Astrocyte of the cerebellum (primary cell): ENCODE measurements at regions of chr1 and their contacts with region 1.

Region 1: DNA sequence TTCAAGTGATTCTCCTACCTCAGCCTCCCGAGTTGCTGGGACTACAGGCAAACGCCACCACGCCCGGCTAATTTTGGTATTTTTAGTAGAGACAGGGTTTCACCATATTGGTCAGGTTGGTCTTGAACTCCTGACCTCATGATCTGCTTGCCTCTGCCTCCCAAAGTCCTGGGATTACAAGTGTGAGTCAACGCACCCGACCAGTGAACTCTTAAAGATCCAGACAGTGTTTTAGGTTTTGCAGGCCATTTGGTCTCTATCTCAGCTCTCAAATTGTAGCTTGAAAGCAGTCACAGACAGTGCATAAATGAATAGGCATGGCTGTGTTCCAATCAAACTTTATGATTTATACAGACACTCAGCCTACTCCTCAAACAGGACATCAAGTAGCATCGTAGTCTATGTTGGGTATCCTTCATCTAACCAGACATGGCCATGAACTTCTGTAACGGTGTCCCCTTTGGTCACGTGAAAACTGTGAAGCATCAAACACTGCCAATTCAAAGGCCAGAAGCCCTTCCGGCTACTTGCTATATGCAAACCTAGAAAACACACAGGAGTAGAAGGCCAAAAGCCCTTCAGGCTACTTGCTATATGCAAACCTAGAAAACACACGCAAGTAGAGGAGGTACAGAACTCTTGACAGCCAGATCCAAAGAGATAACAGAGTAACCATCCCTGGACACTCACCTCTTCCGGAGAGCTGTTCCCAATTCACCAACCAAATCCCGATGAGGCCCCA is 3.1 kb downstream of the FUCA1 start:
- DNase-seq: no peak
- H3K4me3 ChIP-seq: no peak overlapping the region
- CTCF ChIP-seq: no peak

Region 2: GRCh38 chr1:23756676-23757075 is 108.3 kb before region 1 on chr1:
- in situ Hi-C with region 1: loop called (anchors 5 kb)
- DNase-seq: no peak
- H3K4me3 ChIP-seq: no peak overlapping the region
- CTCF ChIP-seq: no peak

Region 3: GRCh38 chr1:23784846-23785245 is 80.1 kb before region 1 on chr1:
- in situ Hi-C with region 1: loop called (anchors 5 kb)
- DNase-seq: no peak
- H3K4me3 ChIP-seq: no peak overlapping the region
- CTCF ChIP-seq: no peak

Region 4: DNA sequence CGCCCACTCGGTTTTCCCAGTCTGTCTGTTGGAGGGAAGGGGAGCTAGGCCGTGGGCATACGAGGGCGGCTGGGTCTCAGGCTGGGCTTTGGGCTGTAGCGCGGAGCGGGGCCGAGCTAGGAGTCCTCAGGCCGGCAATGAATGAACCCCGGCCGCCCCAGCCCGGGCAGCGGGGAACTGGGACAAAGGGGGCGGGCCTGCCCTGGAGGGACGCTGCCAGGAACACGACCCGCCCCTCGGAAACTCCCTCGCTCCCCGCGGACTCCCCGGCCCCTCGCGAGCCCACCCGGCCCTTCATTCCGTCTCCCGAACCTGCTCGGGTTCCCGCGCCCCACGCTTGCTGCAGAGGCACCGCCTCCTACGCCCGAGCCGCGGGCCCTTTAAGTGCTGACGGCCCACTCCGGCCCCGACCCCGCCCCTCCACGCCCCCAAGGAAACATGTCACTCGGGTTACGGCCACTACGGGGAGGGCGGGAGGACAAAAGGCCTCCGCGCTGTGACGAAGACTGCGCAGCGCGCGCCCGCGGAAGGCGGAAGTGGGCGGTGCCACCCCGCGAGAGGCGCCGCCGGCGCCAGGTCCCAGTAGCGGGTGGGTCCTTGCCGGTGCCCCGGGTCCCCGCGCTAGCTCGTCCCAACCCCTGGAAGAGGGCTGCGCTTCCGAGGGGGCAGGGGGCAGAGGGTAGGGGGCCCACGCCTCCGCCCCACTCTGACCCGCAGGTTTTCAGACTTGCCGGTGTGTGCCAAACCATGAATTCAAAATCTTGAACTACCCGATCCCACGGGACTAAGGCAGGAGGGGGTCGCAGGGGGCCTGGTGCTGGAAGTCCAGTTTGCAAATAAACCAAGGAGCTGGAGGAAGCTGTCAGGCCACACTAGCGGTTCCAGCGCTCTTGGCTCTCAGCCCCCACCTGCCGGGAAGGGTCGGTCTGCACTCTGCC is 64.3 kb before region 1 on chr1 and contains the start of gene GALE:
- in situ Hi-C with region 1: no loop called
- DNase-seq: peak; percentile 74
- H3K4me3 ChIP-seq: peak within 1 kb of the TSS; percentile 69
- CTCF ChIP-seq: no peak

Region 5: DNA sequence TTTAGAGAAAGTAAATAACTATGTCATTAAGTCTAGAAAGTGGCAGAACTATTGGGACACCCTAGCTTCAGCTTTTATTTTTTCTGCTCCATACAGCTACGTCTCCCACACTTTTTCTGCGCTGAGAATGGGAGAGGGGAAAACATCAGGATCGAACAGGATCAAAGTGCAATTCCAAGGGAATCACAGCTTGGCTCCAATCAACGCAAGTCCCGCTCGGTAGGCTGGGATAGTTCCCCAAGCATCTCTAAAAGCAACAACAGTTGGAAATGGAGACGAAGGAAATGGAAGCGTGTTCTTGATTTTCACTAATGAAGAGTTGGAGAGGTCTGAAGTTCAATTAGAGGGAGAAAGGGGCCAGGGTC is 40.3 kb before region 1 on chr1:
- in situ Hi-C with region 1: loop called (anchors 5 kb)
- DNase-seq: no peak
- H3K4me3 ChIP-seq: peak overlapping the region; percentile 73
- CTCF ChIP-seq: no peak

Region 6: GRCh38 chr1:24074817-24075725 is 210.1 kb after region 1 on chr1:
- in situ Hi-C with region 1: no loop called
- DNase-seq: no peak
- H3K4me3 ChIP-seq: no peak overlapping the region
- CTCF ChIP-seq: no peak

Region 7: GRCh38 chr1:24341260-24341659 is 476.3 kb after region 1 on chr1:
- in situ Hi-C with region 1: no loop called
- DNase-seq: no peak
- H3K4me3 ChIP-seq: no peak overlapping the region
- CTCF ChIP-seq: no peak